Brain microvascular endothelial cell (primary cell): ENCODE measurements at regions of chr14 and their contacts with region 1.

Region 1: DNA sequence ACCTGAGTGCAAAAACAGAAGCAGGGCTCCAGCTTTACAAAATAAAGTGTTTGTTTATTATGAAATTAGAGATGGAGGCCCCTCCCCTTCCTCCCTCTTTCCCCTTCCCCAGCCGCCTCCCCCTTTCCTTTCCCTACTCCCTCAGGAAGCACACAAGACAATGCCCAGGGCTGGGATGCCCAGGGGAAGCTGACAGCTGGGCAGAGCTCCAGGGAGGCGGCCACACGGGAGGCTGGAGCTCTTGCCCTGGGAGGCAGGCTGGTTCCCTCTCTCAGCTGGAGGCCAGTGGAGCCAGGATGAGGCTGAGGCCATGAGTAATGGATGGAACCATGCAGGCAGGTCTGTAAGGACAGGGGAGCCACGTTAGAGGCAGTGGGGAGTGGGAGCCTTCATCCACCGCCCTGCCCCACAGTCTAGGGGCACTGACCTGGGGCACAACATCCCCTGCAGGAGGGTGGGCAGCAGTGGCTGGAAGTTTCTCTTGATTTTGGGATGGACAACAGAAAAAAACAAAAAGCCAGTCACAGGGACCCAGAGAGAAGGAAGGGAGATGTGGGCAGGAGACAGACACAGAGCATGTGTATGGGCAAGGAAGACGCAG is 5.1 kb downstream of the PSMB11 start:
- DNase-seq: no peak
- H3K4me3 ChIP-seq: no peak overlapping the region
- H3K27ac ChIP-seq: no peak overlapping the region
- H3K27me3 ChIP-seq: no peaks in the 10 kb centered on the region
- CTCF ChIP-seq: no peak

Region 2: GRCh38 chr14:22986508-22987054 is 60.6 kb before region 1 on chr14:
- in situ Hi-C with region 1: loop called (anchors 10 kb)
- DNase-seq: peak; percentile 80
- H3K4me3 ChIP-seq: no peak overlapping the region
- H3K27ac ChIP-seq: no peak overlapping the region
- H3K27me3 ChIP-seq: no peaks in the 10 kb centered on the region
- CTCF ChIP-seq: peak; percentile 93